ENCODE measurements at regions of chr7 and their contacts with region 1.

Region 1: DNA sequence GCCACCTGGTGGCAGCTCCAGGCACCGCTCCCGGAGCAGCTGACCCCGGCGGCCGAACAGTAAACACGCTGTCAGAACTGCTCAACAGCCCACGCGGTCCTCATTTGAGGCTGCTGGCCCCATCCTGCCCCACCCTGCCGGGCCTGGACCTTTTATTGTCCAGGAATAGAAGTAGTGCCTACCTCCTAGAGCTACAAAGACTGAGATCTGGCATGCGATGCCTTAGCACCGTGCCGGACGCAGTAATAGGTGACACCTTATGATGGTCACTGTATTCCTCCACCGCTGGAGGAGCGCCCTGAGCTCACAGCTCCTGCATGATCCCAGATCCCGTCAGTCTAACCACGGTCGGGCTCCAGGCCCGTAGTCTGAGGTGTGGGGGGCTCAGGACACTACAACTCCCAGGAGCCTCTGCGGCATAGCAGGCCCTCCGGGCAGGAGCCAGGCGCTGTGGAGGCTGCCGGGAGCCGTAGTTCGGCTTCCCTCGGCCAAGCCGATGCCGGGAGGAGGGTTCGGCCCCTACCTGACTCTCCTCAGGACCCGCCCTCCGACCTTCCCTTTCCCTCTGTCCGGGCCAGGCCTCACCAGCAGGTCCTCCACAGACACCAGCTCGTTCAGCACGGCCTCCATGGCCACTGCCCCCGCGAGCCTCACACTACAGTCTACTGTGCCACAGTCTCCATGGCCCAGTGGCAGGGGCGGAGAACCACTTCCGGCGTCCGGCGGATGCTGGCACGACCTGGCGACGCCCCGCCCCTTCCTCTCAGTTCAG is at the start of gene FIS1:
- DNase-seq: peak; percentile 94 to 97
- ATAC-seq: peak; percentile 96 to 97 (median 96)
- H3K4me3 ChIP-seq: peak within 1 kb of the TSS; percentile 93
- H3K27ac ChIP-seq: peak within 1 kb of the TSS; percentile 99
- H3K4me1 ChIP-seq: peaks cover 44% of the 10 kb centered on the region
- H3K27me3 ChIP-seq: no peaks in the 10 kb centered on the region
- CTCF ChIP-seq: peak; percentile 91
- total RNA-seq, gene FIS1: 239 to 368 (median 261) TPM

Region 2: DNA sequence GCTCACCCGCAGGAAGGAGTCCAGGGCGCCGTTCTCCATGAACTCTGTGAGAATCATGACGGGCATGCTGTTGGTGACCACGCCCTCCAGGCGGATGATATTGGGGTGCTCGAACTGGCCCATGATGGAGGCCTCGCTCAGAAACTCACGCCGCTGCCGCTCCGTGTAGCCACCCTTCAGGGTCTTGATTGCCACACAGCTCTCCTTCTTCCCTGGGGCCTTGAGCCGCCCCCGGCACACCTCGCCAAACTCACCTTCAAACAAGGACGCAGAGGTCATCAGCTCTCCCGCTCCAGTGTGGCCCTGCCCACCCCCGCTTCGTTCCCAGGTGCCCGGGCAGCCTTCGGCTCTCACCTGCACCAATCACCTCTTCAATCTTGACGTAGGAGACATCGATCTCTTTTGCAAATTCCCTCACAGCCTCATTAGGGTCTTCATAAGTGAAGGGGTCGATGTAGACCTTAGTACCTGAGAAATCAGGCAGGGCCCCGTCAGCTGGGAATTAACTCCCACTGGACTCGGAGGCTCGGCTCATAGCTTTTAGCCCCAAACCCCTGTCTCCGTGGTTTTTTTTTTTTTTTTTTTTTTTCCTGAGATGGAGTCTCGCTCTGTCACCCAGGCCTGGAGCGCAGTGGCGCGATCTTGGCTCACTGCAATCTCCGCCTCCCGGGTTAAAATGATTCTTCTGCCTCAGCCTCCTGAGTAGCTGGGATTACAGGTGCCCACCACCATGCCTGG is 431.7 kb before region 1 on chr7:
- intact Hi-C with region 1: no loop called
- DNase-seq: no peak
- ATAC-seq: no peak
- H3K4me3 ChIP-seq: no peak overlapping the region
- H3K27ac ChIP-seq: no peak overlapping the region
- H3K4me1 ChIP-seq: no peaks in the 10 kb centered on the region
- H3K27me3 ChIP-seq: peaks cover 0 to 1% (median 0%) of the 10 kb centered on the region in 3 donors
- CTCF ChIP-seq: no peak

Region 3: GRCh38 chr7:100889761-100890634 is 354.6 kb before region 1 on chr7:
- intact Hi-C with region 1: loop called in 1 of 2 experiments (anchors 10 kb)
- DNase-seq: peak; percentile 94 to 98
- ATAC-seq: peak; percentile 85 to 89 (median 86)
- H3K4me3 ChIP-seq: peak overlapping the region; percentile 77
- H3K27ac ChIP-seq: peak overlapping the region; percentile 89
- H3K4me1 ChIP-seq: peaks cover 36% of the 10 kb centered on the region
- H3K27me3 ChIP-seq: no peaks in the 10 kb centered on the region
- CTCF ChIP-seq: no peak

Region 4: GRCh38 chr7:101094416-101095375 is 149.9 kb before region 1 on chr7:
- intact Hi-C with region 1: no loop called
- DNase-seq: peak; percentile 63 to 68
- ATAC-seq: peak; percentile 65 to 80 (median 74)
- H3K4me3 ChIP-seq: no peak overlapping the region
- H3K27ac ChIP-seq: no peak overlapping the region
- H3K4me1 ChIP-seq: peaks cover 14% of the 10 kb centered on the region
- H3K27me3 ChIP-seq: no peaks in the 10 kb centered on the region
- CTCF ChIP-seq: peak; percentile 53

Region 5: DNA sequence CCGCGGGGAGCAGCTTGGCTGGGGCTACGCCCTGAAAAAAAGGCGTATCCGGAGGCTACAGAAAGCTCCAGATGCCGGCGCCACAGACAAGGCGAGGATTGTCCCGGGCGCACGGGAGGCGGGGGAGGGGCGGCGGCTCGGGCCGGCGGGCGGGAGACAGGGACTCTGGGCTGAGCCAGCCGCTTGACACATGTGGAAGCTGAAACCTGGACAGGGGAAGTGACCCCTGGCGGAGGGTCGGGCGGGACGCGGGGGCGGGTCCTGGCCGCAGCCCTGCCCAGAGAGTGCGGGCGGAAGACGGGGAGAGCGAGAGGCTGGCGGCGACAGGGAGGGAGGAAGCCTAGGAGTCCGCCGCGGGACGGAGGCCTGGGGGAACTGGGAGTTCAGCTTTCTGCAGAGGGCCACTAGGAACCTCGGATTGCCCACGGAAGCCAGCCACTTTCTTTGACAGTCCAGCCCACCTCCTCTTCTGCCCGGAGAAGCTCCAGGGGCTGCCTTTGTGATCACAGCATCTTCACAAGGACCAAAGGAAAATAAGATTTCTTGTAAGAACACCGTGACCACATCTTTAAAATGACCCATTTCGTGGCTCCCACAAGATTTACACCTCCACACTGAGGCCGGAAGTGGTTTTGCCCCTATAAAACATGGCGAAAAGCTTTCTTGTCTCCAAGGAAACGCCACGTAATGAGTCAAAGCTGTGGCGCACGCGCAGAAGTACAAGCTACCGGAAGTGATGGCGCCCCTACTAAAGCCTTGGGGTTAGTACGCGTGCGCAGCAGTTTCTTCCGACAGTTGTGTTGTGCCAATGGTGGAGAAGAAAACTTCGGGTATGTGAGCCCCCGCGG is 26.9 kb before region 1 on chr7 and contains the starts of genes PLOD3 and ZNHIT1:
- intact Hi-C with region 1: loop called (anchors 2 kb)
- DNase-seq: peak; percentile 98 to 99
- ATAC-seq: peak; percentile 93 to 94 (median 94)
- H3K4me3 ChIP-seq: peak within 1 kb of the TSS; percentile 97
- H3K27ac ChIP-seq: peak within 1 kb of the TSS; percentile 88
- H3K4me1 ChIP-seq: peaks cover 20% of the 10 kb centered on the region
- H3K27me3 ChIP-seq: no peaks in the 10 kb centered on the region
- CTCF ChIP-seq: no peak
- total RNA-seq, gene PLOD3: 18.5 to 25.4 (median 20.4) TPM
- total RNA-seq, gene ZNHIT1: 40.8 to 58.1 (median 48.1) TPM